ENCODE measurements at regions of chr3 and their contacts with region 1.

Region 1: DNA sequence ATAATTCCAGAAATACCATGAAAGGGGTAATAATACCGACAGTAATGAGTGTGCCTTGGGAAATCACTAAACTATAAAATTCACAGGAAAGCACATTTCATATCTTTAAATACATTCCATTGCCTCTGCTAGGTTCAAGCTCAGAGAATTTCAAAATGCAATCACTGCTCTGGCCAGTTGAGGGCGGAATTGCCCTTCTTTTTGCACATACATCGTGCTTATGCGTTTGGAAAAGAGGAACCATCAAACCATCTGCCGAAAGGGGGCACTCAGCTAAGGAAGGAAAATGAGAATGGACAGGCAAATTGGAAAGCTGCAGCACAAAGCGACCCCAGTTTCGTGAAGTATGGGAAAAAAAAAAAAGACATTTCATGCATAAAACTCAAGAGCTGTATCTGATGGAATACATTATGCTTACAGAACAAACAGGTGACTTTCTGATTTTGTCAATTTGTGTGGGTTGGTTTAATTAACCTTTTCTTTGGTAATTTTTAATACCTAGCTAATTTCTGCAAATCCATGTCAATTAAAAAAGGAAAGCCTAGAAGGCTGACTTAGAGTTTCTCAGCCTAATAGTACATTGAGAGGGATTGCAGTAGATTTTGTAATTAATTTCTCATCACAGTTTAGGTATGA is 61.4 kb downstream of the TUSC7 start:
- H3K4me3 Mint-ChIP-seq: no peak overlapping the region
- H3K27ac Mint-ChIP-seq: no peak overlapping the region
- H3K4me1 Mint-ChIP-seq: no peaks in the 10 kb centered on the region
- H3K27me3 Mint-ChIP-seq: peaks cover 3% of the 10 kb centered on the region

Region 2: GRCh38 chr3:116785226-116785625 is 14.3 kb after region 1 on chr3:
- intact Hi-C with region 1: no loop called
- H3K4me3 Mint-ChIP-seq: no peak overlapping the region
- H3K27ac Mint-ChIP-seq: no peak overlapping the region
- H3K4me1 Mint-ChIP-seq: no peaks in the 10 kb centered on the region
- H3K27me3 Mint-ChIP-seq: peaks cover 8% of the 10 kb centered on the region

Region 3: DNA sequence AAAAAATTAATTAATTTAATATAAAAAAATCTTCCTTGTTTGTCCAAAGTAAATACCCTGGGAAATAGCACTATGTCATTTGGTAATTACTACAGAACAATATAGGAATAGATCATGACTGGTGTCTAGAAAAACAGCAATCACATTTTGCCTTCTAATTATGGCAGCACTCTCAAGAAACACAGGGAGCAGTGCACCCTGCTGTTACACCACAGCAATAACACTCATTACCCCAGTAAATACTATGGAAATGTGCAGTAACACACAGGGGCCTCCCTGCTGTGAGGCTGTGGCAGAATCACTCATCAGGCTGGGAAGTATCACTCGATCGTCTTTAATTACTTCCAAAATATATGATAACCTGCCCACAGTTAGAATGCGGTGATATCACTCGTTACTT is 584.6 kb after region 1 on chr3:
- intact Hi-C with region 1: loop called (anchors 5 kb)
- H3K4me3 Mint-ChIP-seq: no peak overlapping the region
- H3K27ac Mint-ChIP-seq: no peak overlapping the region
- H3K4me1 Mint-ChIP-seq: no peaks in the 10 kb centered on the region
- H3K27me3 Mint-ChIP-seq: no peaks in the 10 kb centered on the region

Region 4: DNA sequence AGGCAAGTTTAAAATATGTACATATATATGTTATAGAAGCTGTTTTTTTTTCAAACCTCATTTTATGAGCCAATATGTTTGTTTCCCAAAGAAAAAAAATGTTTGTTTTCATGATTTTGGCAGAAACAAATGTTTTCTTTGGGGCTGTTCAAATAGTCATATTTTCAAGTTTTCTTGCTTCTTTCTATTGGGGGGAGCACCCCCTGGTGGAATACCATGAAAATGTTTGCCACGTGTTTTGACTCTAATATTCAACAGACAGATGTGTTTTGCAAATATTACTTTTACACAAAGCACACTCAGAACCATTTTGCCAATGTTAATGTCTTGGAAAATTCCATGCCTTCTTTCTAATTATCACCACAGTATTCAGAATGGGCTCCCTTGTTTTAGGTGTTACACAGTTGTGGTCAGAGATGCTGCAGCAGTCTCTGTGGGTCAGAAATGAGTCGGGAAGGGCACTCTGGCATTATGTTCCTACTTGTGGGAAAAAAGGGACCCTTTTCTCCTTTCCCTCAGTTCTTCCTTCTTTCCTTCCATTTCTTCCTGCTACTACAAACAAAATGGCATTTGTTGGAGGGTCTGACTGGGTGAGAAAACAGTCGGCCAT is 755.6 kb after region 1 on chr3:
- intact Hi-C with region 1: loop called (anchors 2 kb)
- H3K4me3 Mint-ChIP-seq: no peak overlapping the region
- H3K27ac Mint-ChIP-seq: no peak overlapping the region
- H3K4me1 Mint-ChIP-seq: peaks cover 5% of the 10 kb centered on the region
- H3K27me3 Mint-ChIP-seq: peaks cover 10% of the 10 kb centered on the region

Region 5: GRCh38 chr3:117719316-117719926 is 948.5 kb after region 1 on chr3:
- intact Hi-C with region 1: loop called (anchors 5 kb)
- H3K4me3 Mint-ChIP-seq: no peak overlapping the region
- H3K27ac Mint-ChIP-seq: no peak overlapping the region
- H3K4me1 Mint-ChIP-seq: peaks cover 28% of the 10 kb centered on the region
- H3K27me3 Mint-ChIP-seq: peaks cover 5% of the 10 kb centered on the region

Region 6: GRCh38 chr3:117997201-117998049 is 1226.5 kb after region 1 on chr3:
- intact Hi-C with region 1: loop called (anchors 5 kb)
- H3K4me3 Mint-ChIP-seq: no peak overlapping the region
- H3K27ac Mint-ChIP-seq: no peak overlapping the region
- H3K4me1 Mint-ChIP-seq: no peaks in the 10 kb centered on the region
- H3K27me3 Mint-ChIP-seq: peaks cover 12% of the 10 kb centered on the region